Activated CD4-positive, alpha-beta memory T cell treated with anti-CD3 and anti-CD28 coated beads, Interleukin-2, amount 10 ng/mL, durations not matched to agents 7 days and 5 days (primary cell): ENCODE measurements at regions of chr2 and their contacts with region 1.

Region 1: GRCh38 chr2:96856776-96857673 is 791 bp downstream of the ANKRD39 start:
- DNase-seq: peak; percentile 63
- H3K4me3 Mint-ChIP-seq: peak overlapping the region; percentile 90
- H3K27ac Mint-ChIP-seq: peak overlapping the region; percentile 75
- H3K4me1 Mint-ChIP-seq: peaks cover 45% of the 10 kb centered on the region
- H3K27me3 Mint-ChIP-seq: no peaks in the 10 kb centered on the region

Region 2: DNA sequence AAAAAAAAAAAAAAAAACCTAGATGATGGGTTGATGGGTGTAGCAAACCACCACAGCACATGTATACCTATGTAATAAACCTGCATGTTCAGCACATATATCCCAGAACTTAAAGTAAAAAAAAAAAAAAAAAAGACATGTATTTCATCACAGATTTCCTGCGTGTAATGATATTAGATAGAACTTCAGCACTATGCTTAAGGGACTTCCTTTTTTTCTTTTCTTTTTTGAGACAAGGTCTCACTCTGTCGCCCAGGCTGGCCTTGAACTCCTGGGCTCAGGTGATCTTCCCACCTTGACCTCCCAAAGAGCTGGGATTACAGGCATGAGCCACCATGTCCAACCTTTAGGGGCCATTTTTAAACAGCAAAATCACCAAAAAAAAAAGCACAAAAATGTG is 393.9 kb before region 1 on chr2:
- CTCF ChIA-PET with region 1: no interaction called
- POLR2A ChIA-PET with region 1: no interaction called
- DNase-seq: no peak
- H3K4me3 Mint-ChIP-seq: no peak overlapping the region
- H3K27ac Mint-ChIP-seq: no peak overlapping the region
- H3K4me1 Mint-ChIP-seq: no peaks in the 10 kb centered on the region
- H3K27me3 Mint-ChIP-seq: peaks cover 9% of the 10 kb centered on the region

Region 3: DNA sequence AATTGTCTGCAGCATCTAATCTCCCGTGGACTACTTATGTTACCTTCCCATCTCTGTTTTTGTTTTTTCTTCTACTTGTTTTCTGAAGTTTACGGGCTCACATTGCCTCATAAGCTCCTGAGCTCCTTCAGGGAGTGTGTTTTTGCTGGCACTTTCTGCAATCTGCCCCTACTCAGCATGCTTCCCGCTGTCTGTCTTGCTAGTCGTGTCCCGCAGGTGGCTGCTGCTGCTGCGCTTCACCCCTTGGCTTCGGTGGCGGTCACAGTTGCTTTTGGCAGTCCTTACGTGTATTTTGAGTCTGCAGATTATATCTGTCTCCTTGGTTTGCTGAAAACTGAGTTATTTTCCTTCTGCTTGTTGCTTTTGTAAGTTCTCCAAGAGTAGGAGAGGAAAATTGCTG is 177.2 kb before region 1 on chr2:
- CTCF ChIA-PET with region 1: no interaction called
- POLR2A ChIA-PET with region 1: no interaction called
- DNase-seq: no peak
- H3K4me3 Mint-ChIP-seq: no peak overlapping the region
- H3K27ac Mint-ChIP-seq: no peak overlapping the region
- H3K4me1 Mint-ChIP-seq: no peaks in the 10 kb centered on the region
- H3K27me3 Mint-ChIP-seq: peaks cover 13% of the 10 kb centered on the region

Region 4: DNA sequence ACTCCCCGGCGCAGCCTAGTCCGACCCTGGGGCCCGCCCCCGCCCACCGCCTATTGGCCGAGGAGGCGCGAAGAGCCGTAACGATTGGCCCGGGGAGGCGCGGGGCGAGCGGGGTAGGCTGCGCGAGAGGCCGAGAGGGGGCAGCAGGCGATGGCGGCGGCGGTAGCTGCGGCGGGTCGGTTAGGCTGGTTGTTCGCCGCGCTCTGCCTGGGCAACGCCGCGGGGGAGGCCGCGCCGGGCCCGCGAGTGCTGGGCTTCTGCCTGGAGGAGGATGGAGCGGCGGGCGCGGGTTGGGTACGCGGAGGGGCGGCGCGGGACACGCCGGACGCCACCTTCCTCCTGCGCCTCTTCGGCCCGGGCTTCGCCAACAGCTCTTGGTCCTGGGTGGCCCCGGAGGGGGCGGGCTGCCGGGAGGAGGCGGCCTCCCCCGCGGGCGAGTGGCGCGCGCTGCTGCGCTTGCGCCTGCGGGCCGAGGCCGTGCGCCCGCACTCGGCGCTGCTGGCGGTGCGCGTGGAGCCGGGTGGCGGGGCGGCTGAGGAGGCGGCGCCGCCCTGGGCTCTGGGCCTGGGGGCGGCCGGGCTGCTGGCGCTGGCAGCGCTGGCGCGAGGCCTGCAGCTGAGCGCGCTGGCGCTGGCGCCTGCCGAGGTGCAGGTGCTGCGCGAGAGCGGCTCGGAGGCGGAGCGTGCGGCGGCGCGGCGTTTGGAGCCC is 40.7 kb before region 1 on chr2 and contains the start of gene CNNM3:
- CTCF ChIA-PET with region 1: interaction called, 32 read pairs
- POLR2A ChIA-PET with region 1: interaction called, 21 read pairs
- DNase-seq: peak; percentile 97
- H3K4me3 Mint-ChIP-seq: peak within 1 kb of the TSS; percentile 91
- H3K27ac Mint-ChIP-seq: peak within 1 kb of the TSS; percentile 72
- H3K4me1 Mint-ChIP-seq: peaks cover 59% of the 10 kb centered on the region
- H3K27me3 Mint-ChIP-seq: no peaks in the 10 kb centered on the region
- total RNA-seq, gene CNNM3: 26.6 to 28.5 TPM

Region 5: GRCh38 chr2:96868555-96869280 is 11.7 kb after region 1 on chr2:
- CTCF ChIA-PET with region 1: interaction called, 57 read pairs
- POLR2A ChIA-PET with region 1: interaction called, 43 read pairs
- DNase-seq: peak; percentile 75
- H3K4me3 Mint-ChIP-seq: peak overlapping the region; percentile 82
- H3K27ac Mint-ChIP-seq: peak overlapping the region; percentile 71
- H3K4me1 Mint-ChIP-seq: peaks cover 35% of the 10 kb centered on the region
- H3K27me3 Mint-ChIP-seq: peaks cover 10% of the 10 kb centered on the region

Region 6: GRCh38 chr2:96913398-96914202 is 56.6 kb after region 1 on chr2:
- CTCF ChIA-PET with region 1: interaction called, 6 read pairs
- POLR2A ChIA-PET with region 1: interaction called, 18 read pairs
- DNase-seq: peak; percentile 83
- H3K4me3 Mint-ChIP-seq: peak overlapping the region; percentile 62
- H3K27ac Mint-ChIP-seq: peak overlapping the region; percentile 91
- H3K4me1 Mint-ChIP-seq: peaks cover 47% of the 10 kb centered on the region
- H3K27me3 Mint-ChIP-seq: peaks cover 6% of the 10 kb centered on the region

Region 7: DNA sequence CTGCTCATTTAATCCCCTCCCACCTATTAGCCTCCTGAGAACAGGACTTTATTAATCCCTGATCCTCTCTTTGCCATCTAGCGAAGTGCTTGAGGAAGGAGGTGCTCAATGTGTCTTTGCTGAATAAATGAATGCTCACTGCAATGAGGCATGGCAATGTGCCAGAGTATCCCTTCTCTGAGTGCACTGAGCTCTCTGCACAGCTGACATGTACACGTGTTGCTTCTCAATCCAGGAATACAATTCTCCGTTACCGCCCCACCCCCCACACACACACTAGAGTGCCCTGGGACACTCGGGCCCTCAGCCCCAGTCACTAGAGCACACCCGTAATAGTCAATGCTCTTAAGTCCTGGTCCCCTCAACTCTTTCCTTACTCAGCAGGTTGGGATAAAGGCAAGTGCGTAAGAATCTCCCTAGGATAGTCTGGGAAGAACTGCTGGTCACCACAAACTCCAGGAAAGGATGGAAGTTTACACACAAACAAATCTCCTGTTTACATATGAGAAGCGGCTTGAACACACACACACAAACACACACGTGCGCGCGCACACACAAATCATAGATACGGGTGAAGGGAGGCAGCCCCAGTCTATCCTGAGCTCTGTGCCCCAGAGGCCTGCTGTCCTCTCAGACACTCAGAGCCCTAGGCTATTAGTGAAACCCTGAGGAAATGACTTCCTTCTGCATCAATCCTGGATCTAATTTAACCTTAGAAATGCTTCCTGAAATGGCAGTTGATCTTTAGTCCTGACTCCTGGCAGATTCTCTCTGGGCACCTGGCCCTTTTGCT is 88.2 kb after region 1 on chr2:
- CTCF ChIA-PET with region 1: interaction called, 176 read pairs
- POLR2A ChIA-PET with region 1: interaction called, 62 read pairs
- DNase-seq: no peak
- H3K4me3 Mint-ChIP-seq: no peak overlapping the region
- H3K27ac Mint-ChIP-seq: no peak overlapping the region
- H3K4me1 Mint-ChIP-seq: peaks cover 15% of the 10 kb centered on the region
- H3K27me3 Mint-ChIP-seq: peaks cover 25% of the 10 kb centered on the region

Region 8: DNA sequence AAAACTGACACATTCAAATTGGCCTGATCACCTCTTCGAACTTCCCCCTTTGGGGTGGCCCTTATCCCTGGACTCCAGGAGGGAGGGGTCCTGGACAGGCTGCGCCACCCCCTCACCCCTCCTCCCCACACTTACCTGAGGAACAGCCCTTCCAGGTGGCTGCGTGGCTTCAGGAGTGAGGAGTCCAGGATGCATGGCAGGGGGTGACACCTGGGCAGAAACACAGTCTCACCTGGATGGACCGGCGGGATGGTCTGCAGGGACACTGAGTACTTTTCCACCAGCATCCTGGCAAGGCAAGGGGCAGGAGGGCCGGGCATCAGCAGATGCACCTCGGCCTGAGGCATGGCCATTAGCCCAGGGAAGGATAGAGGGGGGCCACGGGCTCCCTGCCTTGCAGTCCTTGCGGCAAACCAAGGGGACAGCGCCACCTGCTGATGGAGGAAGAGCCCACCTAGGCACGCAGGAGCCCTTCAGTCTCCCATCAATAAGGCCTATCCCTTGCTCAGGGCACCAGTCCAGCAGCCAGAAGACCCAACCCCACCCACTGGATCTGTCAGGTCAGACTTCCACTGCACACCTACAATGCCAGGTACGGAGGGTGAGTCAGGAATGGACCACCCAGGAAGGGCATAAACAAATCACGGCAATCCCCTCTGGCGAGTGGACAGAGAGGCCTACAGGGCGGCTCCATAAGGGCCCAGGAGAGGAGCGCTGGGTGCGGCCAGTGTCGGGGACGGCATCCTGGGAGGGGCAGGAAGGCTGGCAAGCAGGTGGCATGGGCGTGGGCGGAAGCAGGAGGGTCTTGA is 103.3 kb after region 1 on chr2:
- CTCF ChIA-PET with region 1: interaction called, 176 read pairs
- POLR2A ChIA-PET with region 1: interaction called, 39 read pairs
- DNase-seq: peak; percentile 87
- H3K4me3 Mint-ChIP-seq: peak overlapping the region; percentile 14
- H3K27ac Mint-ChIP-seq: peak overlapping the region; percentile 92
- H3K4me1 Mint-ChIP-seq: peaks cover 54% of the 10 kb centered on the region
- H3K27me3 Mint-ChIP-seq: no peaks in the 10 kb centered on the region